ENCODE measurements at regions of chr12 and their contacts with region 1.

Region 1: GRCh38 chr12:54337280-54337842 is 12.4 kb downstream of the COPZ1 start:
- DNase-seq: no peak
- ATAC-seq: no peak
- H3K4me3 Mint-ChIP-seq: no peak overlapping the region
- H3K27ac Mint-ChIP-seq: no peak overlapping the region
- H3K4me1 Mint-ChIP-seq: peaks cover 15% of the 10 kb centered on the region
- H3K27me3 Mint-ChIP-seq: no peaks in the 10 kb centered on the region
- CTCF ChIP-seq: no peak

Region 2: GRCh38 chr12:54306925-54307741 is 30.2 kb before region 1 on chr12:
- CTCF ChIA-PET with region 1: interaction called, 11 read pairs
- POLR2A ChIA-PET with region 1: interaction called, 4 read pairs
- intact Hi-C with region 1: no loop called
- DNase-seq: peak; percentile 44
- ATAC-seq: peak; percentile 69
- H3K4me3 Mint-ChIP-seq: no peak overlapping the region
- H3K27ac Mint-ChIP-seq: no peak overlapping the region
- H3K4me1 Mint-ChIP-seq: peaks cover 9% of the 10 kb centered on the region
- H3K27me3 Mint-ChIP-seq: peaks cover 15% of the 10 kb centered on the region
- CTCF ChIP-seq: no peak

Region 3: GRCh38 chr12:54352022-54352531 is 14.7 kb after region 1 on chr12:
- CTCF ChIA-PET with region 1: interaction called, 97 read pairs
- POLR2A ChIA-PET with region 1: interaction called, 5 read pairs
- intact Hi-C with region 1: no loop called
- DNase-seq: peak; percentile 73
- ATAC-seq: peak; percentile 81
- H3K4me3 Mint-ChIP-seq: peak overlapping the region; percentile 43
- H3K27ac Mint-ChIP-seq: peak overlapping the region; percentile 44
- H3K4me1 Mint-ChIP-seq: peaks cover 15% of the 10 kb centered on the region
- H3K27me3 Mint-ChIP-seq: no peaks in the 10 kb centered on the region
- CTCF ChIP-seq: no peak

Region 4: GRCh38 chr12:54359033-54359761 is 21.8 kb after region 1 on chr12:
- CTCF ChIA-PET with region 1: interaction called, 97 read pairs
- POLR2A ChIA-PET with region 1: interaction called, 5 read pairs
- intact Hi-C with region 1: no loop called
- DNase-seq: peak; percentile 97
- ATAC-seq: peak; percentile 93
- H3K4me3 Mint-ChIP-seq: no peak overlapping the region
- H3K27ac Mint-ChIP-seq: no peak overlapping the region
- H3K4me1 Mint-ChIP-seq: peaks cover 17% of the 10 kb centered on the region
- H3K27me3 Mint-ChIP-seq: no peaks in the 10 kb centered on the region
- CTCF ChIP-seq: no peak

Region 5: GRCh38 chr12:54549774-54550451 is 212.6 kb after region 1 on chr12:
- CTCF ChIA-PET with region 1: no interaction called
- POLR2A ChIA-PET with region 1: no interaction called
- intact Hi-C with region 1: no loop called
- DNase-seq: peak; percentile 63
- ATAC-seq: peak; percentile 87
- H3K4me3 Mint-ChIP-seq: peak overlapping the region; percentile 77
- H3K27ac Mint-ChIP-seq: no peak overlapping the region
- H3K4me1 Mint-ChIP-seq: peaks cover 34% of the 10 kb centered on the region
- H3K27me3 Mint-ChIP-seq: peaks cover 8% of the 10 kb centered on the region
- CTCF ChIP-seq: no peak